ENCODE measurements at regions of chr15 and their contacts with region 1.

Region 1: DNA sequence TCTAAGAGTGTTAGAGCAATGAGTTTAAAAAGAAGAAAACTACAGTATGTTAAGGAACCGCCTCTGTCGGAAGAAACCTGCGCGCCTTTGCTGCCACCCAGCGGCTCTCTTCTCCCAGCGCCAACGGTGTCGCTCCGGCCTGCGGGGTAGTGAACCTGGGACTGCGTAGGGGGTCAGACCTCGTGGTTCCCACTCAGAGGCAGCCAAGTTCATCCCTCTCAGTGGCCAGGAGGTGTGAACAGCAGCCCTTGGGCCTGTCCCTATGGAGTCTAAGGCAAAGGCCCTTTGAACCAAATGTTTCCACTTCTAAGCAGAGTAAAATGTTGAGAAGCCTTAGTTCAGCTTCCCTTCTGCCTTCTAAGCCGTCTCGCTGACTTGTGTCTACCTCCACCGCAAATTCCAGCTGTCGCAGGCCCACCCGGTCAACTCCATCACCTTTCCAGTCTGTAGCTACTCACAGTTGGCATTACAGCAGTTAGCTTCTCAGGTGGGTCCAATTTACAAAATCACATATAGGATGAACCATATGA is 980 bp upstream of the RAB27A start:
- DNase-seq: peak; percentile 80 to 91
- H3K4me3 ChIP-seq: peak overlapping the region; percentile 82 to 90
- H3K27ac ChIP-seq: peak overlapping the region; percentile 93
- H3K4me1 ChIP-seq: peaks cover 0 to 23% (median 11%) of the 10 kb centered on the region in 4 donors
- H3K27me3 ChIP-seq: no peaks in the 10 kb centered on the region
- CTCF ChIP-seq: peak; percentile 83 to 93

Region 2: DNA sequence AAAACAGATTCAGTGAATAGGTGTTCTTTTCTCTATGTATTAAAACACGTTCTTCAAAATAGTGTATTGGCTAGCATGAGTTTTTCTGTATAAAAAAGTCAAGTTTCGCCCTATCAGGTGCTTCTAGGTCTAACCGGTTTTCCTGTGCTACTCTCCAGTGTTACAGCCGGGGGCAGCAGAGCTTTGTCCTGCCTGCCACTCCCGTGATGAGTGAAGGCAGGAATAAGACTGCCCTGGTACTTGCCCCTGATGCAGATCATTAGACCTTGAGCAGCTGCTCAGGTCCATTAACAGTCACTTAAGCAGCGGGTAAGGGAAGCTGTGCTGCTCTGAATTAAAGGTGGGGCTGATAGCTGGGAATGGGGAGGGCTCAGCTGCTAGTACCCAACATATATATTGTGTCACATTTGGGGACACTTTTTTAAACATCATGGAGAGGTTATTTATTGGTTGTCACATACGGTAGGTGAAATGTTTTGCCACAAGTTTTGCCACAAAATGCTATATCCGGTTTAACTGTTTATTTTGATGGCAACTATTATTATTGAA is 1313.7 kb before region 1 on chr15:
- intact Hi-C with region 1: loop called (anchors 10 kb)
- DNase-seq: peak; percentile 25 to 72
- H3K4me3 ChIP-seq: peak overlapping the region in 1 of 2 donors; percentile 61
- H3K27ac ChIP-seq: peak overlapping the region; percentile 76 to 80
- H3K4me1 ChIP-seq: no peaks in the 10 kb centered on the region
- H3K27me3 ChIP-seq: no peaks in the 10 kb centered on the region
- CTCF ChIP-seq: peak; percentile 64 to 77

Region 3: DNA sequence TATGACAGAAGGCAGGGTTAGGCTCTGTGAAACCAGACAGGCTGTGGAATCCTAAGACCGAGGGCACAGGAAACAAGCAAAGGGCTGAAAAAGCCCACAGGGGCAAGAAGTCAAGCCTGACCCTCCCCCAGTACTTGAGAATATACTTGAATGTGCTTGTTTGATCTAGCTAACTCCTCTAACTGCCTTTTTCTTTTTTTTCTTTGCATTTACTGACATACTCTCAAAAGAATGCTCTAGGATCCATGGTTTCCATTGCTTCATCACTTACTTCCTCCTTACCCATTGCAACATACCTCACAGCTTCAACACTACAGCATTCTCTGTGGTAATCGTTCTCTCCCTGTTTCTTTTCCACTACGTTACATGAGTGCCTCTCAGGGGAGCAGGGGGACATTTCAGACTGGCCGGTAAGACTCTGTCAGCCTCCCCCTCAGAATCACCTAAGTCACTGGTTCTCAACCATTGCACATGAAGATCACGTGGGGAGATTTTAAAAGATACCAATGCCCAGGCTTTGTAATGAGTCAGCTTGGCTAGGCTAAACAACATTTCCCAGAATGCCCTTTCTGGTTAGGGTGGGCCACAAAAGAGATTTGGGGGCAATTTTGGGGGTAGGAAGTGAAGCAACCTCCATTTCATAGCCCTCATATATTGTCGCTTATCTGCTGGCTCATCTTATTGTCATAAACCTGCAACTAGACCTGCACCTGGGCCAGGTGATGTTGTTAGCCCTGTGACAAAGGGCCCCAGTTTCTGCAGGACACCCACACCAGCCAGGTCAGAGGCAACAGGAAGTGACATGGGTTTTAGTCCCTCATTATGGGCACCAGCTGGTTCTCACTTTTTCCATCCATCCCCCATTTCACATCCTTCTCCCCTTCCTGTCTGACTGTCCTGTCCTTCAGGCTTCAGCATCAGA is 69.2 kb before region 1 on chr15:
- intact Hi-C with region 1: loop called (anchors 2 kb)
- DNase-seq: no peak
- H3K4me3 ChIP-seq: no peak overlapping the region
- H3K27ac ChIP-seq: peak overlapping the region; percentile 32 to 52
- H3K4me1 ChIP-seq: peaks cover 0 to 13% (median 7%) of the 10 kb centered on the region in 4 donors
- H3K27me3 ChIP-seq: no peaks in the 10 kb centered on the region
- CTCF ChIP-seq: no peak

Region 4: DNA sequence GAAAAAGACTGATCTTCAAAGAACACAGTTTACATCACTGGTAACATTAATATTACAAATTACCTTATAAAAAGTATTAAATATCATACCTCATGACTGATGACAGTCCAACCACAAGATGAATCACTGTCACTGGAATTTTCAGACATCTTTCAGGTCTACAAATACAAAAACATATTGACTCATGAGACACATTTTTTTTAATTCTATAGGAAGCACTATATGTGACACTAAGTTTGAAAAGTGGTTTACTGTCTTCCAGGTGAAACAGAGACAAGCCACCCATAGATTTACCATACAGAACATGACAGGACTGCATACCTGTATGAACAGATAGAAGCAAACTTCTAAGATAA is 98.7 kb after region 1 on chr15:
- intact Hi-C with region 1: no loop called
- DNase-seq: no peak
- H3K4me3 ChIP-seq: no peak overlapping the region
- H3K27ac ChIP-seq: no peak overlapping the region
- H3K4me1 ChIP-seq: no peaks in the 10 kb centered on the region
- H3K27me3 ChIP-seq: no peaks in the 10 kb centered on the region
- CTCF ChIP-seq: no peak